Mammary epithelial cell (primary cell): ENCODE measurements at regions of chr19 and their contacts with region 1.

Region 1: GRCh38 chr19:56393119-56394012 is at the start of gene ZNF582:
- DNase-seq: peak; percentile 90
- H3K4me3 ChIP-seq: peak within 1 kb of the TSS; percentile 60 to 62 (median 60)
- H3K27ac ChIP-seq: peak within 1 kb of the TSS; percentile 36
- H3K4me1 ChIP-seq: no peaks in the 10 kb centered on the region
- H3K27me3 ChIP-seq: no peaks in the 10 kb centered on the region
- CTCF ChIP-seq: peak; percentile 39 to 64
- total RNA-seq, gene ZNF582: 2.4 to 2.8 TPM

Region 2: GRCh38 chr19:56321989-56322440 is 71.4 kb before region 1 on chr19:
- CTCF ChIA-PET with region 1: no interaction called
- dilution Hi-C with region 1: loop called (anchors 5 kb)
- in situ Hi-C with region 1: no loop called
- intact Hi-C with region 1: no loop called
- DNase-seq: no peak
- H3K4me3 ChIP-seq: no peak overlapping the region
- H3K27ac ChIP-seq: no peak overlapping the region
- H3K4me1 ChIP-seq: no peaks in the 10 kb centered on the region
- H3K27me3 ChIP-seq: no peaks in the 10 kb centered on the region
- CTCF ChIP-seq: no peak

Region 3: GRCh38 chr19:56348289-56348877 is 45.0 kb before region 1 on chr19:
- CTCF ChIA-PET with region 1: no interaction called
- dilution Hi-C with region 1: no loop called
- in situ Hi-C with region 1: no loop called
- intact Hi-C with region 1: no loop called
- DNase-seq: peak; percentile 7
- H3K4me3 ChIP-seq: no peak overlapping the region
- H3K27ac ChIP-seq: no peak overlapping the region
- H3K4me1 ChIP-seq: no peaks in the 10 kb centered on the region
- H3K27me3 ChIP-seq: no peaks in the 10 kb centered on the region
- CTCF ChIP-seq: peak; percentile 33 to 38

Region 4: DNA sequence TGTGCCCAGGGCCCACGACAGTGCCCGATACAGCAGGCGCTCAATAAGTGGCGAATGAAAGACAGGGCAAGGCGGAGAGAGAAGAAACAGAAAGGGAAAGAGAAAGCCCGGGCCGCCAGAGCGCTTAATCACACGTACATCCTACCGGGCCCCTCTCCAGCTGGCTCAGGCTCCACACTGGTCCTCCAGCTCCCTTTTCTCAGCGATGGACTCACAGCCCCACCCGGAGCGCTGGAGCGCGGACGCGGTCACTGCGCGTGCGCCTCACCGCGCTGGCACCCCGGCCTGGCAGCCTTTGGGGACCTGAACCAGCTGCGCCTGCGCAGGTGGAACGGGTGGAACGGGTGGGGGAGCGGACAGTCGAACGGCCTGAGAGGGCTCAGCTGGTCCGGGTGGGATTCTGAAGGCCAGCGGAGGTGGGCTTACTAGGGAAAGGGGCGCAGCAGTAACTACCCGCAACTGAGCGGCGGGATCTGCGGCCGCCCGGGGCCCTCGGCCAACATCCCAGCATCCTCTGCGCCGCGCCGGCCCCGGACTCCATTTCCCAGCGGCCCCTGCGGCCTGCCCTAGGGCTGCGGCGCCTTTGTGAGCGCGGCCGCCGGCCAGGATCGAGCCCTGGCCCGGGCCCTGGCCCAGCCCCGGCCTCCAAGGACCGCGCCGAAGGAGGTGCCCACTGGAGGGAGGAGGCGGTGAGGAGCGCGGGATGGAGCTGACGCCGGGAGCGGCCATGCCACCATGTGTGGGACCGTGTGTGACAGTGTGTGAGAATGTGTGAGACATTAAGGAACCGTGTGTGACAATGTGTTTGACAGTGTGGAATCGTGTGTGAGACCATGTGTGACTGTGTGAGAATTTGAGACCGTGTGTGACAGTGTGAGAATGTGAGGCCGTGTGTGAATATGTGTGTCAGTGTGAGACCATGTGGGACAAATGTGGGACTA is 10.7 kb after region 1 on chr19 and contains the start of gene ZNF583:
- CTCF ChIA-PET with region 1: no interaction called
- dilution Hi-C with region 1: no loop called
- in situ Hi-C with region 1: no loop called
- intact Hi-C with region 1: loop called (anchors 1 kb)
- DNase-seq: peak; percentile 96
- H3K4me3 ChIP-seq: peak within 1 kb of the TSS; percentile 64 to 88 (median 67)
- H3K27ac ChIP-seq: peak within 1 kb of the TSS; percentile 9
- H3K4me1 ChIP-seq: peaks cover 7% of the 10 kb centered on the region
- H3K27me3 ChIP-seq: no peaks in the 10 kb centered on the region
- CTCF ChIP-seq: no peak
- total RNA-seq, gene ZNF583: 4.7 to 5.5 TPM

Region 5: GRCh38 chr19:57103573-57104277 is 710.4 kb after region 1 on chr19:
- CTCF ChIA-PET with region 1: no interaction called
- dilution Hi-C with region 1: no loop called
- in situ Hi-C with region 1: no loop called
- intact Hi-C with region 1: loop called (anchors 2 kb)
- DNase-seq: peak; percentile 46
- H3K4me3 ChIP-seq: peak overlapping the region; percentile 11 to 25 (median 17)
- H3K27ac ChIP-seq: no peak overlapping the region
- H3K4me1 ChIP-seq: peaks cover 6% of the 10 kb centered on the region
- H3K27me3 ChIP-seq: no peaks in the 10 kb centered on the region
- CTCF ChIP-seq: peak; percentile 90 to 91